Caco-2 (cell line): ENCODE measurements at regions of chr2 and their contacts with region 1.

Region 1: GRCh38 chr2:43226558-43226954 is at the start of gene ZFP36L2:
- DNase-seq: peak; percentile 97 to 99
- H3K4me3 ChIP-seq: peak within 1 kb of the TSS; percentile 98
- H3K4me3 Mint-ChIP-seq: peak within 1 kb of the TSS; percentile 70
- H3K27ac Mint-ChIP-seq: peak within 1 kb of the TSS; percentile 97
- H3K4me1 ChIP-seq: peaks cover 46% of the 10 kb centered on the region
- H3K4me1 Mint-ChIP-seq: peaks cover 24% of the 10 kb centered on the region
- H3K27me3 ChIP-seq: no peaks in the 10 kb centered on the region
- H3K27me3 Mint-ChIP-seq: no peaks in the 10 kb centered on the region
- CTCF ChIP-seq: peak in 1 of 2 experiments; percentile 10
- total RNA-seq, gene ZFP36L2: 225 and 237 TPM in 2 replicates

Region 2: GRCh38 chr2:42828487-42829425 is 397.8 kb before region 1 on chr2:
- CTCF ChIA-PET with region 1: interaction called, 4 read pairs
- POLR2A ChIA-PET with region 1: no interaction called
- intact Hi-C with region 1: loop called (anchors 1 kb)
- DNase-seq: peak; percentile 80 to 83
- H3K4me3 ChIP-seq: no peak overlapping the region
- H3K4me3 Mint-ChIP-seq: no peak overlapping the region
- H3K27ac Mint-ChIP-seq: no peak overlapping the region
- H3K4me1 ChIP-seq: peaks cover 7% of the 10 kb centered on the region; the same call in 1 of the 2 replicates
- H3K4me1 Mint-ChIP-seq: peaks cover 6% of the 10 kb centered on the region
- H3K27me3 ChIP-seq: no peaks in the 10 kb centered on the region
- H3K27me3 Mint-ChIP-seq: no peaks in the 10 kb centered on the region
- CTCF ChIP-seq: peak; percentile 92 to 93

Region 3: DNA sequence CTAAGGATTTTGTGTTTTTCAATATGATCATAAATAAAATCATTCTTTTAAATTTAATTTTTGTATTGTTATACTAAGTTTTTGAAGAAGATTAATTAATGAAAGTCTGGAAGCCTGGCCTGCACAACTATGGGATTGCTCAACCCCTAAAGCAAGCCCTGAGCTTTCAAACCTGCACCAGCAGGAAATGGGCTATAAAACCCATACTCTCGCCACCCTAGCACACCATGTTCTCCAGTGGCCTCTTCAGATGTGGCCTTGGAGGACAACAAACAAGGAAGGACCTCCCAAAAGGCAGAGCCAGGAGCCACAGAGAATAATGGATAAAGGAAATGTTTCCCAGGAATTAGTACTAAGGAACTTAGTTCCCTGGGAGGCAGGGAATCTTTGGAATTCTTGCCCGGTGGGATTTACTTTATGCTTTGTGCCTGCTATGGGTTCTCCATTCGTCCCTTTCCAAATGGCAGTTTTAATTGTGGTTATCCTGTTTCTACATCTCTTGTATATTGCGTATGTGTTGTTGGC is 212.7 kb before region 1 on chr2:
- CTCF ChIA-PET with region 1: no interaction called
- POLR2A ChIA-PET with region 1: no interaction called
- intact Hi-C with region 1: no loop called
- DNase-seq: peak in 1 of 2 experiments; percentile 14
- H3K4me3 ChIP-seq: no peak overlapping the region
- H3K4me3 Mint-ChIP-seq: no peak overlapping the region
- H3K27ac Mint-ChIP-seq: no peak overlapping the region
- H3K4me1 ChIP-seq: peaks cover 38% of the 10 kb centered on the region
- H3K4me1 Mint-ChIP-seq: peaks cover 38% of the 10 kb centered on the region
- H3K27me3 ChIP-seq: no peaks in the 10 kb centered on the region
- H3K27me3 Mint-ChIP-seq: no peaks in the 10 kb centered on the region
- CTCF ChIP-seq: no peak

Region 4: DNA sequence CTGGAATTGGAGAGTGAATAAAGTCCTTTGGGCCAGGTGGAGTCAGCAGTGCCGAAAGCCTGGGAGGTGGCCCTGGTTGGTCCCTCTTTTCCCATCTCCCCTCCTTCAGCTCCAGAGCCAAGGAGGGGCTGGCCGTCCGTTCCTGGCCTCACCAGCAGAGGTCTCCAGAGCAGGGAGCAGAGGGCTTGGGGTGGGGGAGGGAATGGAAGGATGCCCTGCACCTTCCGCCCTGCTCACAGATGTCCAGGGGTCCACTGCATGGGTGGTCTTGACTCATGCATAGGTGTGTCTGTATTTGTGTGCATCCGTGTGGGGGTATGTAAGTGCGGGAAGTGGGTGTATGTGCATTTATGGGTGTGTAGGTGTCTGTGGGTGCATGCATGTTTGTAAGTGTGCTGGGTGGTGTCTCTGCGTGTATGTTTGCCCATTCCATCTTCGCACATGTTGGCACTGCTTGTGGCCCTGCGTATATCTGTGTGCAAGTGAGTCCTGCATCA is 202.0 kb before region 1 on chr2:
- CTCF ChIA-PET with region 1: interaction called, 3 read pairs
- POLR2A ChIA-PET with region 1: interaction called, 5 read pairs
- intact Hi-C with region 1: loop called (anchors 1 kb)
- DNase-seq: peak; percentile 77 to 82
- H3K4me3 ChIP-seq: no peak overlapping the region
- H3K4me3 Mint-ChIP-seq: no peak overlapping the region
- H3K27ac Mint-ChIP-seq: peak overlapping the region; percentile 36
- H3K4me1 ChIP-seq: peaks cover 38% of the 10 kb centered on the region
- H3K4me1 Mint-ChIP-seq: peaks cover 34% of the 10 kb centered on the region
- H3K27me3 ChIP-seq: no peaks in the 10 kb centered on the region
- H3K27me3 Mint-ChIP-seq: no peaks in the 10 kb centered on the region
- CTCF ChIP-seq: peak; percentile 77 to 92

Region 5: GRCh38 chr2:43161650-43162510 is 64.7 kb before region 1 on chr2:
- CTCF ChIA-PET with region 1: interaction called, 5 read pairs
- POLR2A ChIA-PET with region 1: interaction called, 47 read pairs
- intact Hi-C with region 1: loop called (anchors 1 kb)
- DNase-seq: peak; percentile 94 to 98
- H3K4me3 ChIP-seq: peak overlapping the region; percentile 19
- H3K4me3 Mint-ChIP-seq: peak overlapping the region; percentile 56
- H3K27ac Mint-ChIP-seq: peak overlapping the region; percentile 95
- H3K4me1 ChIP-seq: peaks cover 79% of the 10 kb centered on the region
- H3K4me1 Mint-ChIP-seq: peaks cover 59% of the 10 kb centered on the region
- H3K27me3 ChIP-seq: no peaks in the 10 kb centered on the region
- H3K27me3 Mint-ChIP-seq: no peaks in the 10 kb centered on the region
- CTCF ChIP-seq: peak; percentile 32 to 58

Region 6: GRCh38 chr2:43324259-43325106 is 97.9 kb after region 1 on chr2:
- CTCF ChIA-PET with region 1: no interaction called
- POLR2A ChIA-PET with region 1: no interaction called
- intact Hi-C with region 1: no loop called
- DNase-seq: no peak
- H3K4me3 ChIP-seq: no peak overlapping the region
- H3K4me3 Mint-ChIP-seq: no peak overlapping the region
- H3K27ac Mint-ChIP-seq: no peak overlapping the region
- H3K4me1 ChIP-seq: peaks cover 11% of the 10 kb centered on the region
- H3K4me1 Mint-ChIP-seq: peaks cover 8% of the 10 kb centered on the region
- H3K27me3 ChIP-seq: no peaks in the 10 kb centered on the region
- H3K27me3 Mint-ChIP-seq: no peaks in the 10 kb centered on the region
- CTCF ChIP-seq: no peak

Region 7: GRCh38 chr2:43424262-43425207 is 198.0 kb after region 1 on chr2:
- CTCF ChIA-PET with region 1: interaction called, 3 read pairs
- POLR2A ChIA-PET with region 1: interaction called, 5 read pairs
- intact Hi-C with region 1: loop called (anchors 5 kb)
- DNase-seq: peak in 1 of 2 experiments; percentile 38
- H3K4me3 ChIP-seq: no peak overlapping the region
- H3K4me3 Mint-ChIP-seq: peak overlapping the region; percentile 39
- H3K27ac Mint-ChIP-seq: peak overlapping the region; percentile 66
- H3K4me1 ChIP-seq: peaks cover 80% of the 10 kb centered on the region
- H3K4me1 Mint-ChIP-seq: peaks cover 46% of the 10 kb centered on the region
- H3K27me3 ChIP-seq: no peaks in the 10 kb centered on the region
- H3K27me3 Mint-ChIP-seq: no peaks in the 10 kb centered on the region
- CTCF ChIP-seq: no peak

Region 8: GRCh38 chr2:43542285-43542937 is 315.9 kb after region 1 on chr2:
- CTCF ChIA-PET with region 1: no interaction called
- POLR2A ChIA-PET with region 1: no interaction called
- intact Hi-C with region 1: loop called (anchors 2 kb)
- DNase-seq: peak in 1 of 2 experiments; percentile 19
- H3K4me3 ChIP-seq: no peak overlapping the region
- H3K4me3 Mint-ChIP-seq: no peak overlapping the region
- H3K27ac Mint-ChIP-seq: no peak overlapping the region
- H3K4me1 ChIP-seq: peaks cover 3% of the 10 kb centered on the region; the same call in 1 of the 2 replicates
- H3K4me1 Mint-ChIP-seq: no peaks in the 10 kb centered on the region
- H3K27me3 ChIP-seq: no peaks in the 10 kb centered on the region
- H3K27me3 Mint-ChIP-seq: no peaks in the 10 kb centered on the region
- CTCF ChIP-seq: peak; percentile 37 to 68